ENCODE measurements at regions of chr10 and their contacts with region 1.

Region 1: DNA sequence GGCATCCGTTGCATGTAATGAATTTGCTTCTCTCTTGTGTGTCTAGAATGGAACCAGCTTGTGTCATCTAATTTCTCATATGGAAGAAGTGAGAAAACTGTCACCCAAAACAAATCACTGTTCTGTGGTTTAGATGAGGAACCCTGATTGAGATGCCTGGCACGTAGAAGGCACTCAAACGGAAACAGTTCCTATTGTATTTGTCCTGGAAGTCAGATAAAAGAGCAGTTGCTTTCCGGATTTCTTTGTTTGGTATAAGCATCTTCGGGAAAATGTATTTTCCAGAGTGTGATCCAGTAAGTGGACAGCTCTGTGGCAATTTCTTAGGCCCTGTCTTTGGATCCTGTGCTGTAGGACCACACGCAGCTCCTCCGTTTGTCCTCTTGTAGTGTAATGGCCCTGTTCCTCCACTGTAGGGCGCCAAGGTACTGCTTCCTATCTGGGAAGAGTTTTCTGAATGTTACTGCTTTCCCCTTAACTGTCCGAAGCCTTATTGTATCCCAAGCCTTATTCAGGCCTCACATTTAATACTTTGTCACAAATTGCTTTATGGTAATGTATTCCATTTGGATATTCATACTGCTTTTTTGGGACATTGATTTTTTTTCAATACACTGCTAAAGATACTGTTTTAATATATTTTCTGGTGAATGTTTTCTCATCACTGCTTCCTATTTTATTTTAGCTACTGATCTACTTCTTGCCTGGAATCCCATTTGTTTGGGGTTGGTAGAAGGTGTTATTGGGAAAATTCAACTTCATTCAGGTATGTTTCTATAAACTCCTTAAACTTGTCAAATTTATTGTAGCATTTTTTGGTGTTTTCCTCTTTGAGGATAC is 24.8 kb downstream of the INPP5F start:
- DNase-seq: peak; percentile 70
- H3K4me3 Mint-ChIP-seq: no peak overlapping the region
- H3K27ac Mint-ChIP-seq: no peak overlapping the region
- H3K4me1 Mint-ChIP-seq: peaks cover 9% of the 10 kb centered on the region
- H3K27me3 Mint-ChIP-seq: no peaks in the 10 kb centered on the region

Region 2: DNA sequence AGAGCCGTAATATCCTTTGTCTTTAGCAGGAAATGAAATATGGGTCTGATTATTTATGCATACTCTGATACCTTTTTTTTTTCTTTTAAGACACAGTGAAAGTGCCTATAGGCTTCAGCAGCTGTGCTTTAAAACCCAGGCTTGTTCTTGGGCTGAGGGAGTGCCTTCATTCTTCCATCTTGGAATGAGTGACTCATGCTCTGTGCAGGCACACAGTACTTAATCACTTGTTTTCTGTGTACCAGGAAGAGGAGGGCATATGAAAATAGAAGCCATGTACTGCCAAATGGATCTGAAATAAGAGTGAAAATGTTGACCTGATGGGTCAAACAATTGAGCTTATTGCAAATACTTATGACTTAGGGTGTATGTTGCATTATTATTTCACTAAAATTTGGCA is 12.8 kb before region 1 on chr10:
- CTCF ChIA-PET with region 1: interaction called, 16 read pairs
- POLR2A ChIA-PET with region 1: no interaction called
- DNase-seq: no peak
- H3K4me3 Mint-ChIP-seq: no peak overlapping the region
- H3K27ac Mint-ChIP-seq: no peak overlapping the region
- H3K4me1 Mint-ChIP-seq: peaks cover 22% of the 10 kb centered on the region
- H3K27me3 Mint-ChIP-seq: no peaks in the 10 kb centered on the region

Region 3: DNA sequence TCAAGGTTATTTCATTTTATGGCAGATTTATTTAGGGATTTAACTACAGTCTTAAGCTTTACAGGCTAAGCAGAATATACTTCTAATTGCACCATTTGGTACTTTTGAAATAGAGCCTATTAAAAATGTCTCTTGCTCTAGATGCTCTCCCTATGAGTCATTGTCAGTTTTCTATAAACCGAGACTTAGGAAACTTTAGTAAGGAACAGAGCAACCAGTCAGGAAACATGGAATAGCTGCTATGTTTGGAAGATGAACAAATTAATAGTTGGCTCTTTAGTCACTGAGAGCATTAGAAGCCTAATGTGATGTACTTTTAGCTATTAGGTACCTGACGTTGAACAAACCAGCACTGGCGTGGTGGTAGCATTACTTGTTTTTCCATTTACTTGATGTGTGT is 10.5 kb after region 1 on chr10:
- CTCF ChIA-PET with region 1: interaction called, 14 read pairs
- POLR2A ChIA-PET with region 1: no interaction called
- DNase-seq: no peak
- H3K4me3 Mint-ChIP-seq: no peak overlapping the region
- H3K27ac Mint-ChIP-seq: no peak overlapping the region
- H3K4me1 Mint-ChIP-seq: peaks cover 2% of the 10 kb centered on the region
- H3K27me3 Mint-ChIP-seq: no peaks in the 10 kb centered on the region

Region 4: DNA sequence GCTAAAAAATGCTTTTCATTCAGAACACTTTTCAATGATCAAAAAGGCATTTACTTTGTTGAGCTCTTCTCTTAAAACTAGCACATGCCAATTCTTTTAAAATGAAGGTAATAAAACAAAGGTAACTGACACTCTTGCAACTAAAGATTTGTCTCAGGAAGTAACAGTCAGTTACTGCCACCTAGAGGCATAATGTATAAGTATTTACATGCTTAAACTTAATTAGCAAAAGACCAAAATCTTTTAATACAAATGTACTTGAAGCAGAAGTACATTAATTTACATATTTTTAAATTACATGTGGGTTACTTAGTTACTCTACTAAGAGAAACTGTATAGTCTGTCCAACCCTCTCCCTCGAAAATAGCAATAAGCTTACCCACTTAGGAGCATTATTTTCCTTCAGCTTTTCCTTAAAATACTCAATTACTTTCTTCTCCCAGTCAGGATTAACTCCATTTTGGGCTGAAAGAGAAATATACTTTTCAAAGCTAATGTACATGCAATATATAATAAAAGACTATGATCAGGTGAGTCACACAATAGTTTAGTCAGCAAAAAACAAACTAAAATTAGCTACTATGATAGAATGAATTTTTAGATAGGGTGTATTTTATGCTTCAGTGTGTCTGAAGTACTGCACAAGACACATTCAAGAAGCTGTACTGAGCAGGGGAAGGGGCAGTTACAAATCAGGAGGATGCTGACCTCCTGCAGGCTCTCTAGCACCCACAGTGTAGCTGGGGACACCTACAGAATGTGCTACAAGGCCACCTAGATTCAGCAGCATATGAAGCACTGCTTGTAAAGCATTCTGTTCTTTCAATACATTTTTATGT is 109.0 kb after region 1 on chr10:
- CTCF ChIA-PET with region 1: interaction called, 14 read pairs
- POLR2A ChIA-PET with region 1: no interaction called
- DNase-seq: no peak
- H3K4me3 Mint-ChIP-seq: no peak overlapping the region
- H3K27ac Mint-ChIP-seq: no peak overlapping the region
- H3K4me1 Mint-ChIP-seq: peaks cover 40% of the 10 kb centered on the region
- H3K27me3 Mint-ChIP-seq: no peaks in the 10 kb centered on the region

Measured in activated CD4-positive, alpha-beta T cell treated with anti-CD3 and anti-CD28 coated beads, Interleukin-2, amount 10 ng/mL, durations not matched to agents 7 days and 5 days (primary cell).